ENCODE measurements at regions of chr19 and their contacts with region 1.

Region 1: DNA sequence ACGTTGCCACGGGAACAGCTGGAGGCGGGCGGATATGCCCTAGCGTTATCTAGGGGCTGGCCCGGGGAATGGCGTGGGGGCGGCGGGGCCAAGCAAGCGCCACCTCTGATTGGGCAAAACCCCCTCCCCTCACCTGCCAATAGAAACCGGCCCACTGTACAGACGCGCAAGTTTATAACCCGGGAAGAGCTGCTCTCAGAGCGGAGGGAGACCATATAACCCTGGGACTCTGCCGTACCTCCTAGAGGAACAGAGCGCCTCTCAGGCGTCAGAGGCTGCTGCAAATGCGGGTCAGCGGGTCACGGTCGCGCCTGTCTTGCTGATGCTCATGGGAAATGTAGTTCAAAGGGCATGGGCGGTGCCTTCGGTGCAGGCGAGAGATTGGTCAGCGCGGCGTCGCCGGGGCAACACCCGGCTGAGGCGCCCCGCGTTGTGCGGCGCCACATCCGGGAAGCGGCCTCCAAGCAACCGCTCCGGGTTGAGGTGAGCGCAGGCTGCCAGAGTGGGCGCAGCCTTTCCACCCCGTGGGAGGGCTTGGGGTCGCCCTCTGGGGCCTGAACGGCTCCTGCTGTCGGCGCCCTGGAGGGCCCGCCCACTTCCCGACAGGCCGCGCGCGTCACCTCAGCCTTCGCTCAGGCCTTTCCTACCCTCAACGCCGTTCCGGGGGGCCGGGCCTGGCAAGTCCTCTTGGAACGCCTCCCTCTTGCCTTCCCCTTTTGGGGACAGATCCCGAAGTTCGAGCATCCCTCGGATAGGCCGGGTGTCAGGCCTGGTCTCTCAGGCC is at the start of gene ZNF446:
- DNase-seq: peak; percentile 99
- H3K4me3 Mint-ChIP-seq: peak within 1 kb of the TSS; percentile 93
- H3K27ac Mint-ChIP-seq: peak within 1 kb of the TSS; percentile 97
- H3K4me1 Mint-ChIP-seq: peaks cover 19% of the 10 kb centered on the region
- H3K27me3 Mint-ChIP-seq: no peaks in the 10 kb centered on the region
- total RNA-seq, gene ZNF446: 6.3 and 6.8 TPM in 2 replicates

Region 2: GRCh38 chr19:57706346-57706745 is 769.6 kb before region 1 on chr19:
- intact Hi-C with region 1: no loop called
- DNase-seq: no peak
- H3K4me3 Mint-ChIP-seq: no peak overlapping the region
- H3K27ac Mint-ChIP-seq: no peak overlapping the region
- H3K4me1 Mint-ChIP-seq: peaks cover 14% of the 10 kb centered on the region
- H3K27me3 Mint-ChIP-seq: peaks cover 2% of the 10 kb centered on the region

Region 3: GRCh38 chr19:58346961-58347931 is 128.7 kb before region 1 on chr19:
- intact Hi-C with region 1: no loop called
- DNase-seq: peak; percentile 91
- H3K4me3 Mint-ChIP-seq: peak overlapping the region; percentile 98
- H3K27ac Mint-ChIP-seq: peak overlapping the region; percentile 86
- H3K4me1 Mint-ChIP-seq: peaks cover 16% of the 10 kb centered on the region
- H3K27me3 Mint-ChIP-seq: no peaks in the 10 kb centered on the region

Region 4: GRCh38 chr19:58380722-58381466 is 95.0 kb before region 1 on chr19 and contains the start of gene ZNF837:
- intact Hi-C with region 1: loop called (anchors 2 kb)
- DNase-seq: peak; percentile 99
- H3K4me3 Mint-ChIP-seq: peak within 1 kb of the TSS; percentile 97
- H3K27ac Mint-ChIP-seq: peak within 1 kb of the TSS; percentile 94
- H3K4me1 Mint-ChIP-seq: peaks cover 21% of the 10 kb centered on the region
- H3K27me3 Mint-ChIP-seq: no peaks in the 10 kb centered on the region
- total RNA-seq, gene ZNF837: 0.89 and 1.1 TPM in 2 replicates

Region 5: DNA sequence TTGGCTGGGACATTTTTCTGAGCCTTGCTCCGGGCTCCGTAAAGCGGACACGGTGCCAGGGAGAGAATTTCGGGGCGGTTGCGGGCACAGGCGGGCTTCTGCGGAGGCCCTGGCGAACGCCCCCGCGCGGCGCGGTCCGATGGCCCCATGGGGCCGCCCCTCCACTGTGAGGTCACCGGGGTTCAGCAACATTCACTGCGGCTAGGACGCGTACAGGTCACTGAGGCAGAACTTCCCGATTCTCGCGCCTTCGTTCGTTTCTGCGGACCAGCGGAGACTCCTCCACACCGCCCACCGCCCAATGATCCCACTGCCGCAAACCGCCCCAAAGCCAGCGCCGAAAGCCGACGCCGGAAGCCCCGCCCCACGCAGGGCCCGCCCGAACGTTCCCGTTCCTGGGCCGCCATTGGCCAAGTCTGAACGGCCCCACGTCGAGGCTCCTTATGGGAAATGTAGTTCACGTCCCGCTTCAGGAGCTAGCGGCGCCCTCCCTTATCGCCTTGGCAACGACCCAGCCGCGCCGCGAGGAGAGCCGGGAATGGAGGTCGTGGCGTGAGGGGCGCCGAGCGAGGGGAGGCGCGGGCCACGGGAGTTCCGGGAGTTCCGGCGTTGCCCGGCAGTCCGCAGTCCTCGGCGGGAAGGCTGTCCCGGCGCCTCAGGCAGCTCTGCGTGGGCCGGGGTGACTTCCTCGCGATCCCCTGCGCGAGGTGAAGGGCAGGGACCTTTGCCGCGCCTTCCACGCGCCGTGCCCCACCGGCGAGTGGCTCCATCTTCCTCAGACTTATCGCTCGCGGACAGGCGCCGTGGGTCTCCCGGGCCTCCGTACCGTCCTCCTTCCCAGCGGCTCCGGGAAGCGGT is 67.5 kb before region 1 on chr19 and contains the start of gene ZNF584:
- intact Hi-C with region 1: loop called (anchors 2 kb)
- DNase-seq: peak; percentile 98
- H3K4me3 Mint-ChIP-seq: peak within 1 kb of the TSS; percentile 88
- H3K27ac Mint-ChIP-seq: peak within 1 kb of the TSS; percentile 92
- H3K4me1 Mint-ChIP-seq: peaks cover 32% of the 10 kb centered on the region
- H3K27me3 Mint-ChIP-seq: no peaks in the 10 kb centered on the region
- total RNA-seq, gene ZNF584: 17.4 and 17.7 TPM in 2 replicates

Region 6: DNA sequence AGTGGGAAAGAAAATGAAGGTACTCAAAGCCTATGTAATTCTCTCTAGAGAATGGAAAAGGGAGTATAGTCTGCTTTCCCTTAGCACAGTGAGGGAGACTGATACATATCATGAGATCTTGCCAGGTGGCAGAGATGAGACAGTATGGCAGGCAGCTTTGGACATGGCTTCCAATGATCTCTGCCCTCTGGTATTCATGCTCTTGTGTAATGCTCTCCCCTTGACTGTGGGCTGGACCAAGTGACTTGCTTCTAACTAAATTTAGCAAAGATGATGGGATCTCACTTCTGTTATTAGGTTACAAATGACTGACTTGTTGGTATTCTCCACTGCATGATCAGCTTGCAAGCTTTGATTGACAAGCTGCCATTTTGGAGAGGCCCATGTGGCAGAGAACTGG is 46.2 kb before region 1 on chr19:
- intact Hi-C with region 1: no loop called
- DNase-seq: no peak
- H3K4me3 Mint-ChIP-seq: no peak overlapping the region
- H3K27ac Mint-ChIP-seq: no peak overlapping the region
- H3K4me1 Mint-ChIP-seq: no peaks in the 10 kb centered on the region
- H3K27me3 Mint-ChIP-seq: no peaks in the 10 kb centered on the region

Region 7: GRCh38 chr19:58499021-58499927 is 23.4 kb after region 1 on chr19:
- intact Hi-C with region 1: loop called (anchors 1 kb)
- DNase-seq: peak; percentile 99
- H3K4me3 Mint-ChIP-seq: peak overlapping the region; percentile 96
- H3K27ac Mint-ChIP-seq: peak overlapping the region; percentile 99
- H3K4me1 Mint-ChIP-seq: peaks cover 25% of the 10 kb centered on the region
- H3K27me3 Mint-ChIP-seq: no peaks in the 10 kb centered on the region

Region 8: GRCh38 chr19:58558623-58559274 is 82.8 kb after region 1 on chr19:
- intact Hi-C with region 1: loop called (anchors 2 kb)
- DNase-seq: peak; percentile 100
- H3K4me3 Mint-ChIP-seq: peak overlapping the region; percentile 96
- H3K27ac Mint-ChIP-seq: peak overlapping the region; percentile 98
- H3K4me1 Mint-ChIP-seq: peaks cover 64% of the 10 kb centered on the region
- H3K27me3 Mint-ChIP-seq: no peaks in the 10 kb centered on the region